PC-3 (cell line): ENCODE measurements at regions of chr15 and their contacts with region 1.

Region 1: GRCh38 chr15:92797168-92797951 is 102.8 kb upstream of the CHD2 start:
- DNase-seq: peak; percentile 94
- ATAC-seq: peak; percentile 63
- H3K4me3 ChIP-seq: no peak overlapping the region
- H3K27ac ChIP-seq: peak overlapping the region; percentile 14; the same call in 1 of the 2 replicates
- H3K4me1 ChIP-seq: peaks cover 19% of the 10 kb centered on the region
- H3K27me3 ChIP-seq: no peaks in the 10 kb centered on the region
- CTCF ChIP-seq: peak; percentile 81

Region 2: DNA sequence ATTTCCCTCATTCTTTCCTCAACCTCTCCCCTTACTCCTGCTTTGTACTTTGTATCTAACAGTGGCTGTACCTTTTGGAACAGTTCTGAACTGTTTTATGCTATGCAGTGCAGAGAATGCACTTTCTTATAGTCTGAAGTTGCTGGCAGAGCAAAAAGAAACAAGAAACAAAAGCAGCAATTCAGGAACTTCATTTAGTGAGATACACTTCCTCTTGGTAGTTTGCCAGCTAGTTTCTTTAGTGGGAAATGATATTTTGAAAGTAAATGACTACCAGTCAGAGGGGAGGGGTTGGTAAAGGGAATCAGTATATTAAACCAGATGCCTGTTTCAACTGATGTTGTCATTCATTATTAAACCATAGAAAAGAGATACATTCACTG is 47.8 kb after region 1 on chr15:
- CTCF ChIA-PET with region 1: no interaction called
- POLR2A ChIA-PET with region 1: no interaction called
- intact Hi-C with region 1: no loop called
- DNase-seq: peak; percentile 57
- ATAC-seq: no peak; the same call in 1 of the 2 replicates
- H3K4me3 ChIP-seq: no peak overlapping the region
- H3K27ac ChIP-seq: no peak overlapping the region
- H3K4me1 ChIP-seq: peaks cover 7% of the 10 kb centered on the region; the same call in 1 of the 2 replicates
- H3K27me3 ChIP-seq: no peaks in the 10 kb centered on the region
- CTCF ChIP-seq: no peak

Region 3: DNA sequence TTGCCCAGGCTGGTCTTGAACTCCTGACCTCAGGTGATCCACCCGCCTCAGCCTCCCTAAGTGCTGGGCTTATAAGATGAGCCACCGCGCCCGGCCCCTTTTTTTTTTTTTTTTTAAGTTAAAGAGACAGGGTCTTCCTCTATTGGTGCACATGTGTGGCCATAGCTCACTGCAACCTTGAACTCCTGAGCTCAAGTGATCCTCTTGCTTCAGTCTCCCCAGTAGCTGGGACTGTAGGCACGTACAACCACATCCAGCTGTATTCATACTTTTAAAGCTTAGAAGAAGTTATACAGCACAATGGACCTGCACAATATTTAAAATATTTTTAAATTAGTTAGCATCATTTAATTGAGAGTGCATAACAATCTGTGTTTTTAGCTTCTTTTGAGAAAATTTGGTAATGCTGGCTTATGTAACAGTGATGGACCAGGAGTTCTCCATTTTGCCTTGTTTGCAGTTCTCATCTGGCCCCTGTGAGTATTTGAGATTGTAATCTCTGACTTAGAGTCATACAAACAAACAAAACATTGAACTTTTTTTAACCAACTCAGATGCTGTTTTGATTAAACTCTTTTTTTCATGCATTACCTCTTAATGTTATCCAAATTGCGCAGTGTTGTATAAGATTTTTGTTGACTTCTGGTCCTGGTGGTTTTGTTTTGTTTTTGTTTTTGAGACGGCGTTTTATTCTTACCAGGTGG is 135.7 kb after region 1 on chr15:
- CTCF ChIA-PET with region 1: interaction called, 23 read pairs
- POLR2A ChIA-PET with region 1: no interaction called
- intact Hi-C with region 1: no loop called
- DNase-seq: no peak
- ATAC-seq: no peak
- H3K4me3 ChIP-seq: no peak overlapping the region
- H3K27ac ChIP-seq: no peak overlapping the region
- H3K4me1 ChIP-seq: peaks cover 14% of the 10 kb centered on the region
- H3K27me3 ChIP-seq: no peaks in the 10 kb centered on the region
- CTCF ChIP-seq: no peak